Activated CD4-positive, alpha-beta memory T cell treated with anti-CD3 and anti-CD28 coated beads for 36 hours (primary cell): ENCODE measurements at regions of chr15 and their contacts with region 1.

Region 1: GRCh38 chr15:98904544-98904943 is 103.0 kb downstream of the PGPEP1L start:
- DNase-seq: peak; percentile 20
- H3K4me3 Mint-ChIP-seq: no peak overlapping the region
- H3K27ac Mint-ChIP-seq: no peak overlapping the region
- H3K4me1 Mint-ChIP-seq: peaks cover 15% of the 10 kb centered on the region
- H3K27me3 Mint-ChIP-seq: no peaks in the 10 kb centered on the region

Region 2: GRCh38 chr15:99059010-99059981 is 154.8 kb after region 1 on chr15:
- CTCF ChIA-PET with region 1: interaction called, 4 read pairs
- POLR2A ChIA-PET with region 1: no interaction called
- intact Hi-C with region 1: loop called (anchors 10 kb)
- DNase-seq: peak; percentile 54
- H3K4me3 Mint-ChIP-seq: peak overlapping the region; percentile 49
- H3K27ac Mint-ChIP-seq: no peak overlapping the region
- H3K4me1 Mint-ChIP-seq: peaks cover 4% of the 10 kb centered on the region
- H3K27me3 Mint-ChIP-seq: peaks cover 35% of the 10 kb centered on the region